Lower lobe of right lung (tissue), 2 donors: ENCODE measurements at regions of chr15 and their contacts with region 1.

Region 1: GRCh38 chr15:92082006-92082843 is 228.7 kb downstream of the SLCO3A1 start:
- DNase-seq: no peak
- ATAC-seq: peak; percentile 74 to 81
- H3K4me3 ChIP-seq: no peak overlapping the region
- H3K27ac ChIP-seq: no peak overlapping the region
- H3K4me1 ChIP-seq: peaks cover 17% of the 10 kb centered on the region
- H3K27me3 ChIP-seq: no peaks in the 10 kb centered on the region
- CTCF ChIP-seq: peak; percentile 80

Region 2: GRCh38 chr15:91302588-91303439 is 779.4 kb before region 1 on chr15:
- intact Hi-C with region 1: loop called (anchors 10 kb)
- DNase-seq: no peak
- ATAC-seq: peak; percentile 87 to 89
- H3K4me3 ChIP-seq: no peak overlapping the region
- H3K27ac ChIP-seq: no peak overlapping the region
- H3K4me1 ChIP-seq: peaks cover 7% of the 10 kb centered on the region
- H3K27me3 ChIP-seq: no peaks in the 10 kb centered on the region
- CTCF ChIP-seq: peak; percentile 71

Region 3: GRCh38 chr15:91706322-91707032 is 375.7 kb before region 1 on chr15:
- intact Hi-C with region 1: loop called (anchors 10 kb)
- DNase-seq: peak; percentile 77
- ATAC-seq: peak; percentile 87 to 94
- H3K4me3 ChIP-seq: no peak overlapping the region
- H3K27ac ChIP-seq: peak overlapping the region; percentile 54
- H3K4me1 ChIP-seq: peaks cover 15% of the 10 kb centered on the region
- H3K27me3 ChIP-seq: no peaks in the 10 kb centered on the region
- CTCF ChIP-seq: peak; percentile 86

Region 4: GRCh38 chr15:91752081-91752785 is 330.0 kb before region 1 on chr15:
- intact Hi-C with region 1: no loop called
- DNase-seq: no peak
- ATAC-seq: no peak
- H3K4me3 ChIP-seq: no peak overlapping the region
- H3K27ac ChIP-seq: no peak overlapping the region
- H3K4me1 ChIP-seq: no peaks in the 10 kb centered on the region
- H3K27me3 ChIP-seq: no peaks in the 10 kb centered on the region
- CTCF ChIP-seq: no peak